ENCODE measurements at regions of chr2 and their contacts with region 1.

Region 1: GRCh38 chr2:228318218-228318617 is 136.7 kb upstream of the SPHKAP start:
- DNase-seq: peak; percentile 73
- H3K4me3 Mint-ChIP-seq: no peak overlapping the region
- H3K27ac Mint-ChIP-seq: no peak overlapping the region
- H3K4me1 Mint-ChIP-seq: no peaks in the 10 kb centered on the region
- H3K27me3 Mint-ChIP-seq: peaks cover 24% of the 10 kb centered on the region
- CTCF ChIP-seq: peak; percentile 58

Region 2: DNA sequence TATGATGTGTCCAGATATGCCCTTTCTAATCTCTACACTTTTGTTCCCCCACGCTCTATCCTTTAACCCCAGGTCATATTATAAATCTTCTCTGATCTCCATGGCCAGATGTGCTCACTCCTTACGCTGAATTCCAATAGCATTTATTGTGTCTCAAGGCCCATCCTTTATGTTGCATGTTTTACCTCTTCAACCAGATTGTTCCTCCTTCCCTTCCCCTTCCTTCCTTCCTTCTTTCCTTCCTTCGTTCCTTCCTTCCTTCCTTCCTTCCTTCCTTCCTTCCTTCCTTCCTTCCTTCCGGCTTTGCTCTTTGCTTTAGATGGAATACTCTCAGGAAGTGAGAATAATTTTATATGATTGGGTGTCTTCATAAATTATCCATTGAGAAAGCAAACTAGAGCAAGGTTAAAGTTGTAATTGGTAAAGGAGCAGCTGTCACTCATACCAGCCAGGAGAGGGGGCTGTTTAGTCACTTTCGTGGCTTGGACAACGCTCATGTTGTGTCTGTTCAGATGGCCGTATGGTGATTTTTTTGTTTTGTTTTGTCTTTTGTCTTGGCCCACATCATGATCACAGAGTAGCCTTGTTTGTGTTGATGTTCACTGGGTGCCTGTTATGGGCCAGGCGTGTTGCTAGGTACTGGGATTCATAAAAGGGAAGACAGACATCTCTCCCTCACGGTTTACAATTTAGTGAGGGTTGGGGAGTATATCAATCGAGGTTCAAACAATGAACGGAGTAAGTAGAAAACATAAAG is 378.8 kb before region 1 on chr2:
- CTCF ChIA-PET with region 1: no interaction called
- POLR2A ChIA-PET with region 1: no interaction called
- intact Hi-C with region 1: loop called (anchors 10 kb)
- DNase-seq: peak; percentile 78
- H3K4me3 Mint-ChIP-seq: no peak overlapping the region
- H3K27ac Mint-ChIP-seq: no peak overlapping the region
- H3K4me1 Mint-ChIP-seq: peaks cover 12% of the 10 kb centered on the region
- H3K27me3 Mint-ChIP-seq: no peaks in the 10 kb centered on the region
- CTCF ChIP-seq: peak; percentile 64

Region 3: DNA sequence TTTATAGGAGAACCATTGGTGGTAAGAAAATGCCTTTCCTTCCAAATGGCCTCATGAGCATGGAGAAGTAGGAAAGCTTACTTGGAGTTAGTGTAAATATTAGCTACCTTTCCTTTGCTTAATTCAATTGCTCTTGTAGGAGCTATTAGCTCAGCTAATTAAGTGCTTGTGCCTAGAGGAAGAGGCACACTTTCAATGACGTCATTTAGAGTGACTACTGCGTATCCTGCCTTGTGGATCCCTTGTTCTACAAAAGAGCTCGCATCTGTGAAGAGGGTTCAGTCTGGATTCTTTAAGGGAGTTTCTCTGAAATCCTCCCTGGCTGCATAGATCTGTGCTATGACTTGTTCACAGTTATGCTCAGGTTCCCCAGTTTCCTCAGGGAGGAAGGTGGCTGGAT is 14.3 kb before region 1 on chr2:
- CTCF ChIA-PET with region 1: no interaction called
- POLR2A ChIA-PET with region 1: no interaction called
- intact Hi-C with region 1: no loop called
- DNase-seq: no peak
- H3K4me3 Mint-ChIP-seq: no peak overlapping the region
- H3K27ac Mint-ChIP-seq: no peak overlapping the region
- H3K4me1 Mint-ChIP-seq: no peaks in the 10 kb centered on the region
- H3K27me3 Mint-ChIP-seq: peaks cover 25% of the 10 kb centered on the region
- CTCF ChIP-seq: no peak